Sigmoid colon (tissue), 7 donors: ENCODE measurements at regions of chr12 and their contacts with region 1.

Region 1: DNA sequence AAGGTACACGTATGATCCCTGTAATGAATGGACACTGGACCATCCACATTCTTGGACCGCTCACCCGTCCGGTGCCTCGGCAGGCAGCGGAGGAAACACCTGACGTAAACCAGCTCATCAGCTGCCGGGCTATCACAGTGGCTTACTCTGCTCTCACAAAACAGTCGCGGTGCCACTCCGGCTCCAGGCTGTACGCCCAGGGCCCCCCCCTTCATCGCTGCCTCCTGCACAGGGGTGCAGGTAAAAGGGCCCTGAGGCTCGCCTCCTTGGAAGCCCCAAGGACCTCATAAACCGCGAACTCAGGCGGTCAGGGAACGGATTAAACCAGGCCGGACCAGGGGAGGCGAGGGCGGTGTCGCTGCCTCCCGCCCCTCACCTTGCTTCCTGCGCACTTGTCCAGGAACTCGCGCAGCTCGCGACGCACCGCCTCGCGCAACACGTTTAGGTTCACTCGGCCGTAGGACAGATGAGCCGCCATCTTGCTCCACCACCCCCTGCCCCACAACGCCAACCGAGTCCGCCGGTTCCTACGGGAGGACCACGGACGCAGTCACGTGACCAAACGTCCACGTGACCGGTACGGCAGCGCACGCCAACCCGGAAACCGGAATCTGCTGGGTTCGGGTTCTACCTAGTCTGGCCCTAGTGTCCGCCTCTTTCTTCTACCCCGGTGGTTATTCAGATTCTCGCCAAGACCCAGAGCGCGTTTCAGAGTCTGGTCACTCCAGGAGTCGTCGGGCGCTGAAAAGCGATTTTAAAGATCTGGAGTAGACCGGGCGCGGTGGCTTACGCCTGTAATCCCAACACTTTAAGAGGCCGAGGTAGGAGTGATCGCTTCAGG is at the start of gene VPS33A:
- DNase-seq: peak; percentile 99
- H3K4me3 ChIP-seq: peak within 1 kb of the TSS; percentile 76 to 91 (median 84)
- H3K27ac ChIP-seq: peak within 1 kb of the TSS; percentile 87 to 91 (median 90)
- H3K4me1 ChIP-seq: peaks cover 0 to 17% (median 12%) of the 10 kb centered on the region in 4 donors
- H3K27me3 ChIP-seq: no peaks in the 10 kb centered on the region
- CTCF ChIP-seq: peak in 1 of 4 experiments; percentile 5
- EP300 ChIP-seq: peak in 1 of 4 donors; percentile 57
- POLR2A ChIP-seq: peak in 1 of 2 donors; percentile 21
- total RNA-seq, gene VPS33A: 13.0 to 17.8 (median 16.4) TPM

Region 2: DNA sequence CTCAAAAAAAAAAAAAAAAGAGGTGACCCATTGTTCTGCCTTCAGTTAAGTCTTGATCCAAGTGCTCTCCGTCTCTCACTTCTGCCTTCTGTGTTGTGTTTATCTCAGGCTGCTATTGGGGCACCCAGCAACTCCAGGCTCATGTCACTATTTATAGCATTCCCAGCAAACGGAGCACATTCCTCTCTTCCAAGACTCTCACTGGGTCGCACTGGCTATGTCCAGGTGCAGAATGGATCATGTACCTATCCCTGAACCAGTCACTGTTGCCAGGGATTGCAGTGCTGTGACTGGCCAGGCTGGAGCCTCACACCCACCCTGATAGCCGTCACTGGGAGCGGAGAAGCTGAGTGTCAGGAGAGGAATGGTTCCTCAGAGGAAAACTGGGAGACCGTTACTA is 503.9 kb before region 1 on chr12:
- intact Hi-C with region 1: no loop called
- DNase-seq: no peak
- H3K4me3 ChIP-seq: no peak overlapping the region
- H3K27ac ChIP-seq: peak overlapping the region in 3 of 4 donors; percentile 44 to 64 (median 60)
- H3K4me1 ChIP-seq: peaks cover 0 to 39% (median 33%) of the 10 kb centered on the region in 4 donors
- H3K27me3 ChIP-seq: no peaks in the 10 kb centered on the region
- CTCF ChIP-seq: no peak
- EP300 ChIP-seq: no peak
- POLR2A ChIP-seq: no peak

Region 3: GRCh38 chr12:122225683-122226407 is 40.3 kb before region 1 on chr12 and contains the start of gene DIABLO:
- intact Hi-C with region 1: loop called (anchors 5 kb)
- DNase-seq: peak; percentile 100
- H3K4me3 ChIP-seq: peak within 1 kb of the TSS; percentile 74 to 93 (median 84)
- H3K27ac ChIP-seq: peak within 1 kb of the TSS; percentile 94 to 98 (median 96)
- H3K4me1 ChIP-seq: peaks cover 0 to 36% (median 25%) of the 10 kb centered on the region in 4 donors
- H3K27me3 ChIP-seq: no peaks in the 10 kb centered on the region
- CTCF ChIP-seq: no peak
- EP300 ChIP-seq: peak in 1 of 4 donors; percentile 6
- POLR2A ChIP-seq: peak; percentile 97
- total RNA-seq, gene DIABLO: 43.4 to 56.7 (median 50.7) TPM

Region 4: GRCh38 chr12:122238861-122239260 is 27.3 kb before region 1 on chr12:
- intact Hi-C with region 1: no loop called
- DNase-seq: no peak
- H3K4me3 ChIP-seq: no peak overlapping the region
- H3K27ac ChIP-seq: no peak overlapping the region
- H3K4me1 ChIP-seq: no peaks in the 10 kb centered on the region
- H3K27me3 ChIP-seq: no peaks in the 10 kb centered on the region
- CTCF ChIP-seq: no peak
- EP300 ChIP-seq: no peak
- POLR2A ChIP-seq: no peak

Region 5: DNA sequence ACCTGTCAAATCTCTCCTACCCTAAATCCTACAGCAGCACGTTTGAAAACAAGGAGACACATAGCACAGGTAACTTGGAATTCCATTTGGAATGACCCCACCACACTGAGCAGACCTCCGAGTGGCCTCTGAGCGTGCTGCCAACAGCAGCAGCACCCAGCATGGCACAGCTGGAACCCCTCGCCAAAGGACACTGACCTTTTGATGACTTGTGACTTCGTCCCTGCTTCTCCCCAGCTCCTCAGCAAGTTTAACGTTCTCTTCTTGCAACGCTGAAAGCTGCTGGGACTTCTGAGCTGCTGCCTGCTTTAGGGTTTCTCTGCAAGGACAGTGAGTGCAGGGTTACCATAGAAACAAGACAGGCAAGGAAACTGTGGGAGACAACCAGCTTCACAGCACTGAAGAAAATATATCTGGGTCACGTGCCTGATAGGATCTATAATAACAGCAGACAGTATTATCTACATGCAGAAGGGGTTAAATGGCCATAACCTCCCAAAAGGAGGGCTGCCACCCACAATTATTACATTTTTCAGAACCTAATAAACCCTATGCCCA is 43.5 kb after region 1 on chr12:
- intact Hi-C with region 1: no loop called
- DNase-seq: no peak
- H3K4me3 ChIP-seq: no peak overlapping the region
- H3K27ac ChIP-seq: no peak overlapping the region
- H3K4me1 ChIP-seq: no peaks in the 10 kb centered on the region
- H3K27me3 ChIP-seq: no peaks in the 10 kb centered on the region
- CTCF ChIP-seq: no peak
- EP300 ChIP-seq: no peak
- POLR2A ChIP-seq: no peak

Region 6: DNA sequence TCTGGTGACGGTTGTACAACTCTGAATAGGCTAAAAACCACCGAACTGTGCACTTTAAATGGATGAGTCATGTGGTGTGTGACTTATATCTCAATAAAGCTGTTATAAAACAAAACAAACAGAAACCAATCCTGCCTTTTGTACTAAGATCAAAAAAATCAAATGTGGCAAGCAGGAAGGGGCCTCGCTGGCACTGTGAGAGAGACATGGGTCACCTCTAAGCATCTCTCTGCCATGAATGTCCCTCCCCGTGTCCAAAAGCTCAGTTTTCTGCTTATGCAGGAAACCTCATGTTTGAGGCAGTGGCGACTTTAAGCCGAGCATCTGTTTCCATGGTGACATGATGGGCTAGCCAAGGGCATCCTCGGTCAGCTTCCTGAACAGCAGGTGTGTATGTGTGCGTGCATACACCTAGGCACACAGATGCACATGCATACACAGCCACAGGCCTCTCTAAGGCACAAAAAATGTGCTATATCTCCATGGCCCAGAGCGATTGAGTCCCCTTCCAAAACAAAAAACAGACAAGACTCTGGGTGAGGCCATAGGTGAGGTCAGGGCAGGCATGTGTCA is 758.8 kb after region 1 on chr12:
- intact Hi-C with region 1: no loop called
- DNase-seq: no peak
- H3K4me3 ChIP-seq: no peak overlapping the region
- H3K27ac ChIP-seq: no peak overlapping the region
- H3K4me1 ChIP-seq: no peaks in the 10 kb centered on the region
- H3K27me3 ChIP-seq: no peaks in the 10 kb centered on the region
- CTCF ChIP-seq: no peak
- EP300 ChIP-seq: no peak
- POLR2A ChIP-seq: no peak